ENCODE measurements at regions of chr12 and their contacts with region 1.

Region 1: DNA sequence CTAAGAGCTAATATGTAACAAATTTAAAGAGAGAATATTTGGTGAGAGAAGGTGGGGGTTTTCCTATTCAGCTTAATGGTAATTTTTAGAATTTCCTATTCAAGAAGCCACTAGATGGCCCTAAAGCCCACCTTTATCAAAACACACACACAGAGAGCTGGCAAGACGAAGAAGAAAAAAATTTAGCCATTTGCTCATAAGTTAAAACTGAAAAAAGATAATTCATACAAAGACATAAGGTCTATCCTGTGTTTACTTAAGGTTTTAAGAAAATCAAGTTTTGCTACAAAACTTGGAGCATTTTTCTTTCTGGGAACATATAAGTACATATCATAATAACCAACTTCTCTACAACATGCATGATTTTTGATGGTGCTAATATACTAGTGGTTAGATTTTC is 46.8 kb upstream of the PCED1B start:
- DNase-seq: peak; percentile 38
- ATAC-seq: no peak
- H3K4me3 Mint-ChIP-seq: no peak overlapping the region
- H3K27ac Mint-ChIP-seq: no peak overlapping the region
- H3K4me1 Mint-ChIP-seq: peaks cover 11% of the 10 kb centered on the region
- H3K27me3 Mint-ChIP-seq: peaks cover 2% of the 10 kb centered on the region

Region 2: DNA sequence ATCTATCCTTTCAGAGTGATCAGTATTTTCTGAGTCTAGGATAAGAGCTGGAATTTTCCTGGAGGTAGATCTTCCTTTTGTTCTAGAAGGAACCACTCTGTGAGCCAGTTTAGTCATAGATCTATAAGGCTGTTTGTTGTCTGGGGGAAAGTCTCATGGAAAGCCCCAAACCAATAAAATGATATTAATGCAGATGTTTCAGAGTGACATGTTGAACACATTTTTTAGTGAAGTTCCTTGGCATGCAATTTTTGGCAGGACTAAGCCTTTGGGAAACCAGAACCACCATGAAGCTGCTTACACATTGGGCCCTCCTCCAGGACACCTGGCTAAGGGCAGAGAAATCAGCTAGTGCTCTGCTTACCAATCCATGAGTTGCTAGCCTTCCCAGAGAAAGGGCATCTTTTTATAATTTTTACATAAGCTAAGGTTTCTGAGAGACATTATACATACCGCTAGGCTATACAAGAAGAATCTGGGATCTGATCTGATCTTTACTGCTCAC is 54.7 kb before region 1 on chr12:
- CTCF ChIA-PET with region 1: no interaction called
- POLR2A ChIA-PET with region 1: no interaction called
- DNase-seq: no peak
- ATAC-seq: no peak
- H3K4me3 Mint-ChIP-seq: no peak overlapping the region
- H3K27ac Mint-ChIP-seq: no peak overlapping the region
- H3K4me1 Mint-ChIP-seq: no peaks in the 10 kb centered on the region
- H3K27me3 Mint-ChIP-seq: peaks cover 4% of the 10 kb centered on the region

Region 3: DNA sequence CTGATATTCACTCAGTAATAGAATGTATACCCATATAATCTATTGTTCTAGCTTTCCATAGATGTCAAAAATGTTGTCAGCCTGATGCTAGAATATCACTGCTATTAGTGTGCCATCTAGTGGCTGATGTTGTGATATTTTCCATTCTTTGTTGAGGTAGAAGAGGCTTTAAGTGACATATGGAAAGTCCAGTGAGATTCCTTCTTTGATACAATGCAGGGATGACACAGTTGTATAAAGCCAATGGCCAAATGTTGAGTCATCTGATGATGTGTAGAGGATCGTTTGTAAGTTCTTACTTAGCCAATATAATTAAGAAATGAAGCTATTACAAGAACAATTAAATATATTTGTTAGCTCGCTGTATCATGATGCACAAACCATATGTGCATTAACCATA is 11.3 kb before region 1 on chr12:
- CTCF ChIA-PET with region 1: interaction called, 24 read pairs
- POLR2A ChIA-PET with region 1: no interaction called
- DNase-seq: peak; percentile 41
- ATAC-seq: peak; percentile 53
- H3K4me3 Mint-ChIP-seq: no peak overlapping the region
- H3K27ac Mint-ChIP-seq: no peak overlapping the region
- H3K4me1 Mint-ChIP-seq: no peaks in the 10 kb centered on the region
- H3K27me3 Mint-ChIP-seq: peaks cover 34% of the 10 kb centered on the region

Region 4: GRCh38 chr12:47190271-47190750 is 157.7 kb after region 1 on chr12:
- CTCF ChIA-PET with region 1: interaction called, 39 read pairs
- POLR2A ChIA-PET with region 1: no interaction called
- DNase-seq: no peak
- ATAC-seq: no peak
- H3K4me3 Mint-ChIP-seq: no peak overlapping the region
- H3K27ac Mint-ChIP-seq: peak overlapping the region; percentile 66
- H3K4me1 Mint-ChIP-seq: peaks cover 70% of the 10 kb centered on the region
- H3K27me3 Mint-ChIP-seq: no peaks in the 10 kb centered on the region

Region 5: GRCh38 chr12:47216150-47216677 is 183.6 kb after region 1 on chr12:
- CTCF ChIA-PET with region 1: interaction called, 14 read pairs
- POLR2A ChIA-PET with region 1: interaction called, 4 read pairs
- DNase-seq: peak; percentile 92
- ATAC-seq: peak; percentile 54
- H3K4me3 Mint-ChIP-seq: peak overlapping the region; percentile 83
- H3K27ac Mint-ChIP-seq: peak overlapping the region; percentile 93
- H3K4me1 Mint-ChIP-seq: peaks cover 27% of the 10 kb centered on the region
- H3K27me3 Mint-ChIP-seq: no peaks in the 10 kb centered on the region

Region 6: GRCh38 chr12:47408171-47408871 is 375.7 kb after region 1 on chr12:
- CTCF ChIA-PET with region 1: interaction called, 15 read pairs
- POLR2A ChIA-PET with region 1: no interaction called
- DNase-seq: peak; percentile 67
- ATAC-seq: peak; percentile 80
- H3K4me3 Mint-ChIP-seq: no peak overlapping the region
- H3K27ac Mint-ChIP-seq: peak overlapping the region; percentile 73
- H3K4me1 Mint-ChIP-seq: peaks cover 49% of the 10 kb centered on the region
- H3K27me3 Mint-ChIP-seq: no peaks in the 10 kb centered on the region

Region 7: DNA sequence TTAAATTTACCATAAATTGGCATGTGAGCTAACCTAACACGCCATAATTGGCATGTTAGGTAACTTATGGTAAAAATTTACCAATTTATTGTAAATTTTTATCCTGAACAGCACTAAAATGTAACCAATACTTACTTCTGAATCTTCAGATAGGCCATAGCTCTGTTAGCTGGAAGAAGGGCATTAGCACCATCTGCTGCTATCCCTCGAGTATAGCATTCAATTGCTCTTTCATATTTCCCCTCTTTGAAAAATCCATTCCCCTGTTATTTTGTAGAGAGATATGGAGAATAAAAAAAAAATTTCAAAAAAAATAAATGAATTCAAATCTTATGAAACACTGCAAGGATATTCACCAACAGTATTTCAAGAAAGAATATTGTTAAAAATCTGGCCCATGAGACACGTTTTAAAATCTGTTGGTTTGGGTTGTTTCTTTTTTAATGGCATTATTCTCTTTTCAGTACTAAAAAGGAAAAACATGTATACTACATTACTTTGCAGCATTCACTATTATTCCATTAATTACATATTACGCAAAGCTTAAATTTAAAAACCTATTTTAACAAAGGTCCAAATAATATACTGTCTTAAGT is 654.1 kb after region 1 on chr12:
- CTCF ChIA-PET with region 1: interaction called, 11 read pairs
- POLR2A ChIA-PET with region 1: no interaction called
- DNase-seq: peak; percentile 48
- ATAC-seq: peak; percentile 58
- H3K4me3 Mint-ChIP-seq: no peak overlapping the region
- H3K27ac Mint-ChIP-seq: no peak overlapping the region
- H3K4me1 Mint-ChIP-seq: no peaks in the 10 kb centered on the region
- H3K27me3 Mint-ChIP-seq: no peaks in the 10 kb centered on the region